ENCODE measurements at regions of chr12 and their contacts with region 1.

Region 1: DNA sequence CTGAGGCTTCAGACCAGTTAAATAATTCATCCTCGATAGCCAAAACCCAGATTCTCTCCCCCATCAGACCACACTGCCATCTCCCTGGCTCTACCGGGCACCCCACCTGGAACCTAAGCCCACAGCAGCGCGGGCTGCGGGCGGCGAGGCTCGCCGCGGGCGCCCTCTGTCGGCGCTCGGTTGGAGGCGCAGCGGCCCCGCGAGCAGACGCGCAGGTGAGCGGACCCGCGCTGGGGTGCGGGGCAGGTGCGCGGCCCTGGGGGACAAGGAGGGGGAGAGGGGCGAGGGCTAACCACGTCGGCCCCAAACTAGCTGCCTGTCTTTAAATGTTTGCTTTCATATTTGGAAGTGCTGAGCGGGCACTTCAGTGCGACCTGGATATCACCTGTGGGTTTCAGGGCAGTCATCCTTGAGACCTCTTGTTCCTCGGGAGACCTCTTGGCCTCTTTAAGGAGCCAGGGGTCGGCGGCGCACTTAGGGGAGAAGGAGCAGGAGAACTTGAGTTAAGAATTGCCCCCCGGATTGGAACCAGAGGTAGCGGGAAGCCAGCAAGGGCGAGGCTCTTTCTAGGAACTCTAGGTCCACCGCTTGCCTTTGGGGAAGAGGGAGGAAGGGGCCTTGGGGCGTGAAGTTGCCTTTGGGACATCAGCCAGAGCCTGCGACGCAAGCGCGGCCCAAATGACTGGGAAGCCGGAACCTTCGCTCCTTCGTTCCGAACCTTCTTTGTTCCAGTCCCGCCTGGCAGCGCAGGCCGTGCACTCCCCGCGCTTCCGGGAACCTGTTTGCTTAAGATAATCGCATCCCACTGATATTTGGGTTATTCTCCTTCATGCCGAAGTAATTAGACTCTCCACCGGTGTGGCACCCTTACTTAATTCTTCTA is 78.7 kb downstream of the NEDD1 start:
- DNase-seq: peak; percentile 69
- H3K4me3 Mint-ChIP-seq: peak overlapping the region; percentile 65
- H3K27ac Mint-ChIP-seq: no peak overlapping the region
- H3K4me1 Mint-ChIP-seq: no peaks in the 10 kb centered on the region
- H3K27me3 Mint-ChIP-seq: peaks cover 22% of the 10 kb centered on the region
- CTCF ChIP-seq: peak; percentile 91

Region 2: GRCh38 chr12:96578526-96579125 is 407.1 kb before region 1 on chr12:
- CTCF ChIA-PET with region 1: no interaction called
- intact Hi-C with region 1: loop called (anchors 1 kb)
- DNase-seq: peak; percentile 20
- H3K4me3 Mint-ChIP-seq: no peak overlapping the region
- H3K27ac Mint-ChIP-seq: no peak overlapping the region
- H3K4me1 Mint-ChIP-seq: no peaks in the 10 kb centered on the region
- H3K27me3 Mint-ChIP-seq: no peaks in the 10 kb centered on the region
- CTCF ChIP-seq: peak; percentile 34

Region 3: DNA sequence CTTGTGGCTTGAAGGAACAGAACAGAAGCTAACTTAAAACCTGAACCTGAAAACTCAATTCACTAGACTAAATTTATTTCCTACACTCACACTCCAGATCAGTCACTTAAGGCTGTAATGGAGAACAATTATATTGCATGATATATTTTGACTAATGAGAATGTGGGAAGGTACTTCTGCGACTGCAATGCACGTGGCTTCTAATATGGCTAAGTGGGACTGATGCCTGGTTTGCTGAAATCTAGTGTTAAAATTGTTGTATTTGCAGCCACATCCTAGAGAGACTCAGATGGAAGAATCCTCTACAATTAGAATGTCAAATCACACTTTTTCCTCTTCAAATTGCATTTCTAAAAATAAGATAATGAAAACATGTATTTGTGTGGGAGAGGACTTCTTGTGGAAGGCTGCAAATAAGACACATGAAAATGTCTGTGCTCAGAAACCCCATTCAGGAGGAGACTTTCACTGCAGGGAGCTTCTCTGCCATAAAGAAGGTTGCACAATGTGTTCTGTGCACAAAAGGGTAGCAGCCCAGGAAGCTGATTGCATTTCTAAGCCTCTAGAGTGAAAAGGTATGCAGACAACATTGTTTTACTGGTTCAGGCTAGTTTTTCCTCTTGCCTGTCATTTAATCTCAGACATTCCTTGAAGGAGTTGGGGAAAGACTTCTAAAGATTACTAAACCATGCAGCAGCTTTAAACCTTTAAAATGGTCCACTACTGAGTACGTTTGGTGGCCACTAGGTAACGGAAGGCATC is 145.7 kb after region 1 on chr12:
- CTCF ChIA-PET with region 1: no interaction called
- intact Hi-C with region 1: no loop called
- DNase-seq: no peak
- H3K4me3 Mint-ChIP-seq: no peak overlapping the region
- H3K27ac Mint-ChIP-seq: no peak overlapping the region
- H3K4me1 Mint-ChIP-seq: no peaks in the 10 kb centered on the region
- H3K27me3 Mint-ChIP-seq: peaks cover 43% of the 10 kb centered on the region
- CTCF ChIP-seq: no peak

Region 4: DNA sequence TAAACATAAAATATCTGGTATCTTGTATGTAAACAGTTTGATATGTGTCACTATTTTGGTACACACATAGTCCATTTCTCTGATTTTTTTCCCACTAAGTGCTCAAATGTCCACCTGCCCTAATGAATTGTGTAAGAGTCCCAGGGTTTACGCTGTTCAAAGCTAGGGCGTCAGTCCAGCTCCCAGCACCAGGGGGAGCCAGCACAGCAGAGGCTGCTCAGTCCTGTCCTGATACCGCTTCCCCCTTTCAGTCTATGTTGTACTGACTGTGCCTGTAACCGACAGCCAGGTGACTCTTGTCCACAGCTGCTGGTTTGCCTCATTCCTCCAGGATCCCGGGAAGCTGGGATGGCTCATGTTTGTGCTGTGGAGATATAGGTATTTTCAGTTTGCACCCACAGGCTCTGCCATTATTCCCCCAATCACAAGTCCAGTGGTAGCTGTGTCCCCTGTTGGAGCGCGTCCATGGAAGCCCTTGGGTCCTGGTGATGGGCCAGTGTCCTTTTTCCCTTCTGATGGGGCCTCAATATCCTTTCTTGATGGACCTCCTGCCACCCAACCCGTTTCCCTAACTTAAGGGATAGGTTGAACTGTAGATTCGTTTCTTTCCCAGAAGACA is 163.3 kb after region 1 on chr12:
- CTCF ChIA-PET with region 1: interaction called, 4 read pairs
- intact Hi-C with region 1: loop called (anchors 5 kb)
- DNase-seq: peak; percentile 87
- H3K4me3 Mint-ChIP-seq: no peak overlapping the region
- H3K27ac Mint-ChIP-seq: no peak overlapping the region
- H3K4me1 Mint-ChIP-seq: no peaks in the 10 kb centered on the region
- H3K27me3 Mint-ChIP-seq: peaks cover 22% of the 10 kb centered on the region
- CTCF ChIP-seq: peak; percentile 81

Region 5: GRCh38 chr12:97404543-97404942 is 418.8 kb after region 1 on chr12:
- CTCF ChIA-PET with region 1: no interaction called
- intact Hi-C with region 1: loop called (anchors 2 kb)
- DNase-seq: peak; percentile 64
- H3K4me3 Mint-ChIP-seq: no peak overlapping the region
- H3K27ac Mint-ChIP-seq: no peak overlapping the region
- H3K4me1 Mint-ChIP-seq: no peaks in the 10 kb centered on the region
- H3K27me3 Mint-ChIP-seq: no peaks in the 10 kb centered on the region
- CTCF ChIP-seq: peak; percentile 82

Region 6: DNA sequence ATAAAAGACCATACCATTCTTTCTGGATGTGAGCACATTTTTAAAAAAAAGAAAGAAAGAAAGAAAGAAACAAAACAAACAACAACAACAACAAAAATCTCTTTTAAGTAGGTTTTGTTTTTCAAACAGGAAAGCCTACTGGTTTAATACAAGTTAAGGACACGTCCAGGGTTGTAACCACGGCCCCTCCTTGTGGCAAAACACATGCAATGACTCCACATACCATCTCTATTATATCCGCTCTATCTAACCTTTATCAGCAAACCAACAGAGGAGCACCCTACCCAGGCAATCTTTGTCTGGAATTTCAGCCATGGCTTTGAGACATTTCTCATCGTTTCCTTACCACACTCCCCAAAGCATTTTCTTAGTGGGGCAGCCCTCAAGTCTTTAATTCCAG is 1169.1 kb after region 1 on chr12:
- CTCF ChIA-PET with region 1: interaction called, 8 read pairs
- intact Hi-C with region 1: loop called (anchors 2 kb)
- DNase-seq: peak; percentile 61
- H3K4me3 Mint-ChIP-seq: no peak overlapping the region
- H3K27ac Mint-ChIP-seq: no peak overlapping the region
- H3K4me1 Mint-ChIP-seq: peaks cover 8% of the 10 kb centered on the region
- H3K27me3 Mint-ChIP-seq: no peaks in the 10 kb centered on the region
- CTCF ChIP-seq: peak; percentile 44

Region 7: DNA sequence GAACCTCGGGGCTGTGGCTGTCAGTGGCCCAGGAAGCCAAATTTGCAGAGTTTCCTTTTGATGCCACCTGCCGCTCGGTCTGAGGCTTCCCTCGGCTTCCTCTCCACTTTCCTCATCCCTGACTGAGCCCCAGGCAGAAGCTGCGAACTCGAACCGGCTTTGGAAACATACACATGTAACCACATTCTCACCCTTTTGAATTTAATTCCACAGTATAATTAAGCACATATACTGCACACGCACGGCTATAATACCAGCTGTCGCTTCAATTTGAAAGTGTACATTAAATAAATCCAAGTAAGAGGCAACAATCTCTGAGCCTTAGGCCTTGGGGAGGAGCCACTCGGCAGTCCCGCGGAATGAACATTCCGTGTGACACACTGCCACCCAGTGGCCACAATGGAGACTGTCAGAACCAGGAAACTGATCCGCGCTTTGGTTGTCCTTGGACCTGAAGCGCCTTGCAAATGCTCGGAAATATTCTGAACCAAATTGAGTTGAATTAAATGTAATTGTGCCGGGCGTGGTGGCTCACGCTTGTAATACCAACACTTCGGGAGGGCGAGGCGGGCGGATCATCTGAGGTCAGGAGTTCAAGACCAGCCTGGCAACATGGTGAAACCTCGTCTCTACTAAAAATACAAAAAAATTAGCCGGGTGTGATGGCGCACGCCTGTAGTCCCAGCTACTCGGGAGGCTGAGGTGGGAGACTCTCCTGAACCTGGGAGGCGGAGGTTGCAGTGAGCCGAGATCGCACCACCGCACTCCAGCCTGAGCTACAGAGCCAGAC is 1411.8 kb after region 1 on chr12:
- CTCF ChIA-PET with region 1: interaction called, 4 read pairs
- intact Hi-C with region 1: loop called (anchors 2 kb)
- DNase-seq: peak; percentile 88
- H3K4me3 Mint-ChIP-seq: peak overlapping the region; percentile 80
- H3K27ac Mint-ChIP-seq: peak overlapping the region; percentile 67
- H3K4me1 Mint-ChIP-seq: peaks cover 41% of the 10 kb centered on the region
- H3K27me3 Mint-ChIP-seq: peaks cover 7% of the 10 kb centered on the region
- CTCF ChIP-seq: peak; percentile 86

Measured in Calu3 (cell line).